ENCODE measurements at regions of chr17 and their contacts with region 1.

Region 1: GRCh38 chr17:74379495-74380085 is 12.3 kb downstream of the GPR142 start:
- DNase-seq: peak; percentile 93
- H3K4me3 Mint-ChIP-seq: no peak overlapping the region
- H3K27ac Mint-ChIP-seq: no peak overlapping the region
- H3K4me1 Mint-ChIP-seq: peaks cover 9% of the 10 kb centered on the region
- H3K27me3 Mint-ChIP-seq: peaks cover 12% of the 10 kb centered on the region

Region 2: GRCh38 chr17:74394977-74395376 is 15.4 kb after region 1 on chr17:
- CTCF ChIA-PET with region 1: interaction called, 29 read pairs
- POLR2A ChIA-PET with region 1: no interaction called
- DNase-seq: no peak
- H3K4me3 Mint-ChIP-seq: no peak overlapping the region
- H3K27ac Mint-ChIP-seq: no peak overlapping the region
- H3K4me1 Mint-ChIP-seq: peaks cover 3% of the 10 kb centered on the region
- H3K27me3 Mint-ChIP-seq: peaks cover 13% of the 10 kb centered on the region

Region 3: GRCh38 chr17:74408262-74408661 is 28.7 kb after region 1 on chr17:
- CTCF ChIA-PET with region 1: no interaction called
- POLR2A ChIA-PET with region 1: no interaction called
- DNase-seq: no peak
- H3K4me3 Mint-ChIP-seq: no peak overlapping the region
- H3K27ac Mint-ChIP-seq: no peak overlapping the region
- H3K4me1 Mint-ChIP-seq: no peaks in the 10 kb centered on the region
- H3K27me3 Mint-ChIP-seq: peaks cover 7% of the 10 kb centered on the region

Region 4: GRCh38 chr17:74457146-74457819 is 77.7 kb after region 1 on chr17:
- CTCF ChIA-PET with region 1: interaction called, 128 read pairs
- POLR2A ChIA-PET with region 1: interaction called, 5 read pairs
- DNase-seq: peak; percentile 79
- H3K4me3 Mint-ChIP-seq: no peak overlapping the region
- H3K27ac Mint-ChIP-seq: peak overlapping the region; percentile 34
- H3K4me1 Mint-ChIP-seq: peaks cover 50% of the 10 kb centered on the region
- H3K27me3 Mint-ChIP-seq: peaks cover 21% of the 10 kb centered on the region

Region 5: DNA sequence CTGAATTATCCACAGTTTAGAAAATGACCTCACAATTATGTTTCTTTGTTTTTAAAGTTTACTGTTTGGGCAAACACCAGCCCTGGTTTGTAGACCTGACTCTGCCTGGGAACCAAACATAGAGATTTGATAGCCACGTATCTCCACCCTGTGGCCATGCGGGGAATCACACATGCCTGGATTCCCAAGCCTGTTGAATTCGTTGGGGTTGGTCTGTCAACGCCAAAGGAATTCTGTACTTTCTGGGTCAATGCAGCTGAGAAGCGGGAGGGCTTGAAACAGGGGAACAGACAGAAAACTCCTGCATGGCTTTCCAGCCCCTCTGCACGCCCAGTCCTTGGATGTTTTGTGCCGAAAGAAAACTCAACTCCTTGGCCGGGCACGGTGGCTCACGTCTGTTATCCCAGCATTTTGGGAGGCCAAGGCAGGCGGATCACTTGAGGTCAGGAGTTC is 113.8 kb after region 1 on chr17:
- CTCF ChIA-PET with region 1: interaction called, 48 read pairs
- POLR2A ChIA-PET with region 1: interaction called, 4 read pairs
- DNase-seq: peak; percentile 75
- H3K4me3 Mint-ChIP-seq: no peak overlapping the region
- H3K27ac Mint-ChIP-seq: no peak overlapping the region
- H3K4me1 Mint-ChIP-seq: peaks cover 22% of the 10 kb centered on the region
- H3K27me3 Mint-ChIP-seq: peaks cover 15% of the 10 kb centered on the region

Region 6: GRCh38 chr17:74601944-74602572 is 222.5 kb after region 1 on chr17:
- CTCF ChIA-PET with region 1: interaction called, 10 read pairs
- POLR2A ChIA-PET with region 1: no interaction called
- DNase-seq: peak; percentile 51
- H3K4me3 Mint-ChIP-seq: no peak overlapping the region
- H3K27ac Mint-ChIP-seq: no peak overlapping the region
- H3K4me1 Mint-ChIP-seq: peaks cover 17% of the 10 kb centered on the region
- H3K27me3 Mint-ChIP-seq: peaks cover 46% of the 10 kb centered on the region

Measured in activated CD4-positive, alpha-beta memory T cell treated with anti-CD3 and anti-CD28 coated beads, Interleukin-2, amount 10 ng/mL, durations not matched to agents 7 days and 5 days (primary cell).